Naive thymus-derived CD4-positive, alpha-beta T cell (primary cell): ENCODE measurements at regions of chr2 and their contacts with region 1.

Region 1: GRCh38 chr2:219294356-219295351 is 14.5 kb downstream of the PTPRN start:
- DNase-seq: peak; percentile 80 to 93 (median 90)
- ATAC-seq: peak; percentile 99
- H3K4me3 ChIP-seq: peak overlapping the region; percentile 47
- H3K4me3 Mint-ChIP-seq: peak overlapping the region; percentile 68 to 89 (median 82)
- H3K27ac ChIP-seq: peak overlapping the region; percentile 79
- H3K27ac Mint-ChIP-seq: peak overlapping the region; percentile 56 to 88 (median 84)
- H3K4me1 ChIP-seq: peaks cover 2 to 20% of the 10 kb centered on the region in 2 donors
- H3K4me1 Mint-ChIP-seq: peaks cover 11 to 34% (median 27%) of the 10 kb centered on the region in 7 donors
- H3K27me3 ChIP-seq: no peaks in the 10 kb centered on the region
- H3K27me3 Mint-ChIP-seq: peaks cover 0 to 9% (median 0%) of the 10 kb centered on the region in 5 donors

Region 2: DNA sequence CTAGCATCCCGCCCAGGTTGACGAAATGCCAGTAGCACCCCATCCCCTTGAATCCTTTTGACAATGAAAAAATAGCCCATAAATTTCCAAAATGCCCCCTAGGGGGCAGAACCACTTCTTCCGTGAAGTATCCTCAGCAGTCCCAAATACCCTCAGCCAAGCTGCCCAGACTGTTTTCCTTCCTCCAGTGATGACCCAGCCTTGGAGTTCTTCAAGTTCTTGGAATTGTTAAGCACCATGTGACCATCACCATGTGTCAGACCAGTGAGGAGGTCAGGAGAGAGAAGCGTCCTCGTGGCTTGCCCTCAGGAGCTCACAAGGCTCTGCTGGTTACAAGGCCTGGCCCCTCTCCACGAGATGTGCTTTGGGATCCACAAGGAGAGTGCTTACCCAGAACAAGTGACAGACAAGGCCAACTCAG is 123.4 kb before region 1 on chr2:
- CTCF ChIA-PET with region 1: interaction called, 12 read pairs
- POLR2A ChIA-PET with region 1: interaction called, 22 read pairs
- intact Hi-C with region 1: loop called (anchors 1 to 2 kb)
- DNase-seq: peak in 7 of 9 donors; percentile 21 to 55 (median 50)
- ATAC-seq: peak; percentile 69
- H3K4me3 ChIP-seq: no peak overlapping the region
- H3K4me3 Mint-ChIP-seq: no peak overlapping the region
- H3K27ac ChIP-seq: peak overlapping the region; percentile 40
- H3K27ac Mint-ChIP-seq: peak overlapping the region in 7 of 9 donors; percentile 21 to 89 (median 65)
- H3K4me1 ChIP-seq: peaks cover 18 to 27% of the 10 kb centered on the region in 2 donors
- H3K4me1 Mint-ChIP-seq: peaks cover 33 to 44% (median 37%) of the 10 kb centered on the region in 7 donors
- H3K27me3 ChIP-seq: no peaks in the 10 kb centered on the region
- H3K27me3 Mint-ChIP-seq: no peaks in the 10 kb centered on the region

Region 3: DNA sequence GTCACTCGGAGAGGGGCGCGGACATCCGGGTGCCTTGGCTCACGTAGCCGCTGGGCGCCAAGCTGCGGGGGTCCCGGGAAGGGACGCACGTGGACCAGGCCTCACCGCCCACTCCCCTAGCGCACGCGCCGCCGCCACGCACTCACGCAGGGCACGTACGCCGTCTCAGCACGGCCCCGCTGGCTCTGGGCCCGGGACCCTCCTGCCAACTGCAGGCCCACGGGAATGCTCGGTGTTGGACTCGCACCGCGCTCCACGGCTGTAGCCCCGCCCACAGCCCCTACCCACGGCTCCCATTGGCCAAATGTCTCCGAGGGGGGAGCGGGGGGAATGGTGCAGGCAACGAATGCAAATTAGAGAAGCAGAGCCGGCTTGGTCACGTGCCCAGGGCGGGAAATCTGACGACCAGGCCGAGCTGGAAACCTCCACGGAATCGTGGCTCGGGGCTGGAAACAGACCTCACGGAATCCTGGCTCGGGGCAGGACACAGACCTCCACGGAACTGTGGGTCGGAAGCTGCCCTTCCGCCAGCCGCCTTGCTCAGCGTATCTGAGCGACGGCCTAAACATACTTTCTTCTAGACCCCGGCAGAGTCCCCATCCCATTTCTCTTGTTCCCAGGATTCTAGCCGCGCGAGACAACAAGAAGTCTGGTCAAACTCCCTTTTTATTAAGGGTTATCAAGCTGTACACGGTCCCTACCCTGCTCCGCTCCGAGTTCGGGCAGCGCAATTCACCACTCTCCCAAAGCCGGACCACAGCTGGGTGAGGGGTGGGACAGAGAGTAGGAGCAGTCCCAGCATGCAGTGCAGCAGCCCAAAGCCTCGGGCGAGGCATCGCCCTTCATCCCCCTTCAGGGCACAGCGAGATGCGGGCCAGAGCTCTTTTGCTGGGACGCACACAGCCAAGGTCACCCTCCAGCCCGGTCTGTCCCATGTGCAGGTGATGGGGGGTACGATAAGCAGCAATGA is 75.6 kb before region 1 on chr2 and contains the start of gene ABCB6:
- CTCF ChIA-PET with region 1: interaction called, 5 read pairs
- POLR2A ChIA-PET with region 1: interaction called, 7 read pairs
- intact Hi-C with region 1: loop called in 1 of 2 experiments (anchors 2 kb)
- DNase-seq: peak; percentile 72 to 90 (median 85)
- ATAC-seq: peak; percentile 92
- H3K4me3 ChIP-seq: peak within 1 kb of the TSS; percentile 60
- H3K4me3 Mint-ChIP-seq: peak within 1 kb of the TSS; percentile 78 to 89 (median 82)
- H3K27ac ChIP-seq: peak within 1 kb of the TSS; percentile 65
- H3K27ac Mint-ChIP-seq: peak within 1 kb of the TSS; percentile 61 to 86 (median 79)
- H3K4me1 ChIP-seq: peaks cover 13 to 14% of the 10 kb centered on the region in 2 donors
- H3K4me1 Mint-ChIP-seq: peaks cover 0 to 29% (median 24%) of the 10 kb centered on the region in 7 donors
- H3K27me3 ChIP-seq: no peaks in the 10 kb centered on the region
- H3K27me3 Mint-ChIP-seq: no peaks in the 10 kb centered on the region
- total RNA-seq, gene ABCB6: 4.1 to 30.2 (median 8.3) TPM

Region 4: GRCh38 chr2:219229305-219230058 is 65.2 kb before region 1 on chr2 and contains the starts of genes ANKZF1 and ATG9A:
- CTCF ChIA-PET with region 1: interaction called, 6 read pairs
- POLR2A ChIA-PET with region 1: interaction called, 12 read pairs
- intact Hi-C with region 1: loop called (anchors 1 kb)
- DNase-seq: peak; percentile 92 to 99 (median 99)
- ATAC-seq: peak; percentile 98
- H3K4me3 ChIP-seq: peak within 1 kb of the TSS; percentile 80
- H3K4me3 Mint-ChIP-seq: peak within 1 kb of the TSS; percentile 94 to 100 (median 98)
- H3K27ac ChIP-seq: peak within 1 kb of the TSS; percentile 90
- H3K27ac Mint-ChIP-seq: peak within 1 kb of the TSS; percentile 96 to 100 (median 96)
- H3K4me1 ChIP-seq: peaks cover 17 to 22% of the 10 kb centered on the region in 2 donors
- H3K4me1 Mint-ChIP-seq: peaks cover 33 to 83% (median 69%) of the 10 kb centered on the region in 7 donors
- H3K27me3 ChIP-seq: no peaks in the 10 kb centered on the region
- H3K27me3 Mint-ChIP-seq: no peaks in the 10 kb centered on the region
- total RNA-seq, gene ANKZF1: 117 to 287 (median 169) TPM
- total RNA-seq, gene ATG9A: 52.6 to 66.0 (median 60.9) TPM

Region 5: GRCh38 chr2:219245148-219245898 is 49.3 kb before region 1 on chr2 and contains the starts of genes GLB1L and STK16:
- CTCF ChIA-PET with region 1: interaction called, 13 read pairs
- POLR2A ChIA-PET with region 1: interaction called, 22 read pairs
- intact Hi-C with region 1: loop called in 1 of 2 experiments (anchors 2 kb)
- DNase-seq: peak; percentile 76 to 95 (median 85)
- ATAC-seq: peak; percentile 80
- H3K4me3 ChIP-seq: peak within 1 kb of the TSS; percentile 92
- H3K4me3 Mint-ChIP-seq: peak within 1 kb of the TSS; percentile 82 to 100 (median 93)
- H3K27ac ChIP-seq: peak within 1 kb of the TSS; percentile 89
- H3K27ac Mint-ChIP-seq: peak within 1 kb of the TSS; percentile 88 to 99 (median 97)
- H3K4me1 ChIP-seq: peaks cover 52 to 53% of the 10 kb centered on the region in 2 donors
- H3K4me1 Mint-ChIP-seq: peaks cover 26 to 73% (median 59%) of the 10 kb centered on the region in 7 donors
- H3K27me3 ChIP-seq: no peaks in the 10 kb centered on the region
- H3K27me3 Mint-ChIP-seq: peaks cover 0 to 2% (median 0%) of the 10 kb centered on the region in 5 donors
- total RNA-seq, gene GLB1L: 1.9 to 4.5 (median 2.7) TPM
- total RNA-seq, gene STK16: 17.4 to 35.0 (median 21.8) TPM

Region 6: GRCh38 chr2:219352448-219353023 is 57.9 kb after region 1 on chr2:
- CTCF ChIA-PET with region 1: interaction called, 3 read pairs
- POLR2A ChIA-PET with region 1: no interaction called
- intact Hi-C with region 1: loop called in 1 of 2 experiments (anchors 1 kb)
- DNase-seq: peak; percentile 25 to 66 (median 58)
- ATAC-seq: peak; percentile 87
- H3K4me3 ChIP-seq: no peak overlapping the region
- H3K4me3 Mint-ChIP-seq: no peak overlapping the region
- H3K27ac ChIP-seq: no peak overlapping the region
- H3K27ac Mint-ChIP-seq: no peak overlapping the region
- H3K4me1 ChIP-seq: no peaks in the 10 kb centered on the region
- H3K4me1 Mint-ChIP-seq: no peaks in the 10 kb centered on the region
- H3K27me3 ChIP-seq: no peaks in the 10 kb centered on the region
- H3K27me3 Mint-ChIP-seq: peaks cover 43 to 64% (median 48%) of the 10 kb centered on the region in 5 donors